ENCODE measurements at regions of chr9 and their contacts with region 1.

Region 1: DNA sequence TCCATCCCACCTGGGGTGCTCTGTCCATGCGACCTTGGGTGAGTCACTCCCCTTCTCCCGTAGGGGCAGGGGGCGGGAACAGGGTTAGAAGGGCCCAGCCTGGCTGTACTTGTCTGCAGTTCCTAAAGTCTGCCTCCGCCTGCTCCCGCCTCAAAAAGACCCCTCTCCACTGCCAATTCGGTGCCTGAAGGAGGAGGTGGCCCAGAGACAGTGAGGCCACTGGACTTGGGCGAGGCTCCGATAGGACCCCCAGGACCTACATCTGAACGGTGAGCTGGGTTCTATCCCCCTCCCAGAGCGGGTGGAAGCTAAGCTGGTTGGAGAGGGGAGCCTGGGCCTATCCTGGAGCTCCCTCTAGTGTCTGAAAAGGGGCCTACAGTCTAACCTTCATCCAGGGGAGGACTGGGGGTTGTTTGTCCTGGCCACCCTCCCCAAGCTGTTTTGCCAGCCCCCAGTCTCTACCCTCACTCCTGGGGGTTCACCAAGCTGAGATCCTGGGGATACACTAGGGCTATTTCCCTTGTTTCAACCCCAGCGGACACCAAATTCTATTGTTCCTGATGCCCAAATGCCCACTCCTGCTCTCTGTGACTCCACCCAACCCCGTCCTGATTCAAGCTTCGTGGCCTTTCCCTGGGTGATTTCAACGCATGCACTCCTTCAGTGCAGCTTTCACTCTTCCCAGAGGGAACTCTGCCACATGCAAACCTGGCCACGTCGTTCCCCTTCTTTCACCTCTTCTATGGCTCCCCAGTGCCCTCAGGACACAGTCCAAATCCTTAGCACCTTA is 6.1 kb upstream of the CRB2 start:
- DNase-seq: peak; percentile 46 to 91
- H3K4me3 ChIP-seq: peak overlapping the region in 1 of 4 experiments; percentile 35; a peak in 1 of 8 replicates
- H3K27ac ChIP-seq: no peak overlapping the region
- H3K4me1 ChIP-seq: peaks cover 0 to 11% (median under 1%) of the 10 kb centered on the region in 4 experiments; a peak in 4 of 7 replicates
- H3K27me3 ChIP-seq: no peaks in the 10 kb centered on the region; a peak in 2 of 7 replicates
- CTCF ChIP-seq: peak in 2 of 3 experiments; percentile 91 to 96; a peak in 3 of 4 replicates
- EP300 ChIP-seq: no peak
- POLR2A ChIP-seq: no peak
- RAD21 ChIP-seq: peak; percentile 100

Region 2: DNA sequence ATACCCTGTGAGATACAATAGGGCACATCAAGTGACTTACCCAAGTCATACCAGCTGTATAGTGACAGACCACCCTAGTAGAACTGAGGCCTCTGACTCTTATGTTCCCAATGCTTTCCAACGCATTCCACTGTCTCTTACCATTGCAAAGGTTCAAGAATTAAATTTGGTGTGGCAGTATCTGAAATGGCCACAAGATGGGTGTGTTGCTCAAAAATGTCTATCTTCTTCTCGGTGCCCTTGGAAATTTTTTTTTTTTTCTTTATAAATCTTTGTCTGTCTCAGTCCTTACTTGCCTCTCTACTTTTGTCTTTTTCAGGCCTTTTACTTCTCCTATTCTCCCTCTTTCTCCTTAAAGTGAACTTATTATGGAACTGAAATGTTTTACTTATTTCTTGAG is 268.1 kb before region 1 on chr9:
- CTCF ChIA-PET with region 1: interaction called, 53 read pairs
- POLR2A ChIA-PET with region 1: no interaction called
- DNase-seq: no peak
- H3K4me3 ChIP-seq: no peak overlapping the region
- H3K27ac ChIP-seq: no peak overlapping the region
- H3K4me1 ChIP-seq: peaks cover 0 to 5% (median 2%) of the 10 kb centered on the region in 4 experiments; a peak in 3 of 7 replicates
- H3K27me3 ChIP-seq: no peaks in the 10 kb centered on the region
- CTCF ChIP-seq: peak in 2 of 3 experiments; percentile 56 to 58; a peak in 2 of 4 replicates
- EP300 ChIP-seq: no peak
- POLR2A ChIP-seq: no peak
- RAD21 ChIP-seq: peak; percentile 84 to 86

Region 3: DNA sequence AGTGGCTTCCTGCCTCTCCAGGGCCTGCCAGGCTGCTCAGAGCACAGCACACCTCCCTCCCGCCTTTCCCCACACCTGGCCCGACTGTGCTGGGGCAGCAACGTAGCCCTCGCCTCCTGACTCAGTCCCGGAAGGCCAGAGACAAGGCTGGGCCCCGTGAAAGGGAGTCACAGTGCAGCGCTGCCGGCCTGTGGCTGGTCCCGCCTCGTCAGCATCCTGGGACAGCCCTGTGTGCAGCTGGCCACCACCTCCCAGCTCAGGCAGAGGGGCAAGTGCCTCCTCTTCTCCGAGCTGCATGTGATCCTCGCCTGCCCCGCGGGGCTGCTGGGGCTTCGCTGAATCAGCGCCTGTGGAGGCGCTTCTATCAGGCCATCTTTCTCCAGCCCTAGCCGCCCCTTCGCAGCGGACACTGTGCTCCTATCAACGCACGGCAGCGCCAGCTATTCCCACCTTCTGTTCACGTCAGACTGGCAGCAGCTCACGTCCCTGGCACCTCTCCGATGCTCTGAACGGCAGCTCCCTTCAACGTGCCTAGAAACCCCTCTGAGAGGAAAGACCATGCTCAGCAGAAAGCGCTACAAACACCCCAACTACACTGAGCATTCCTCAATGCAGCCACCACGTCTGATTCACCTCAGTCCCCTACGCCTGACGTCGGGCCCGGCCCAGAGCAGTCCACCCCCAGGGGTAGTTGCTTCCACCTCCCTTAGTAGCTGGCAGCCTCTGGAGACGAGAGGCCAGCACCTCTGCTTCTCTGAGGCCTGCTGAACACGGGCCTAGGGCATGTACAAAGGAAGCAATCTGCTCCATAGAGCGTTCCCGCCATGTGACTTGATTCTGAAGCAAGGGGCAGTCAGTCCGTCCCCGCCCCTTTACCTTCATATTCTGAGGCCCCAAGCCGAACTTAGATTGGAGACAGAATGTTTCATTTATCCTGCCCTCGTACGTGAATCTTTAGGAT is 237.6 kb before region 1 on chr9:
- CTCF ChIA-PET with region 1: interaction called, 21 read pairs
- POLR2A ChIA-PET with region 1: interaction called, 3 read pairs
- DNase-seq: no peak
- H3K4me3 ChIP-seq: no peak overlapping the region
- H3K27ac ChIP-seq: no peak overlapping the region
- H3K4me1 ChIP-seq: peaks cover 0 to 11% (median 5%) of the 10 kb centered on the region in 4 experiments; a peak in 5 of 7 replicates
- H3K27me3 ChIP-seq: no peaks in the 10 kb centered on the region
- CTCF ChIP-seq: no peak
- EP300 ChIP-seq: no peak
- POLR2A ChIP-seq: 0 out of 3 replicates have a peak, but pooled peaks of 1 of the 2 experiments have one; percentile 34
- RAD21 ChIP-seq: no peak

Region 4: GRCh38 chr9:123268240-123268949 is 81.5 kb before region 1 on chr9 and contains the start of gene STRBP:
- CTCF ChIA-PET with region 1: interaction called, 12 read pairs
- POLR2A ChIA-PET with region 1: no interaction called
- DNase-seq: peak; percentile 61 to 94
- H3K4me3 ChIP-seq: peak within 1 kb of the TSS; percentile 53 to 99 (median 67)
- H3K27ac ChIP-seq: no peak within 1 kb of the TSS
- H3K4me1 ChIP-seq: peaks cover 0 to 27% (median 8%) of the 10 kb centered on the region in 4 experiments; a peak in 6 of 7 replicates
- H3K27me3 ChIP-seq: no peaks in the 10 kb centered on the region
- CTCF ChIP-seq: 0 out of 4 replicates have a peak, but pooled peaks of 1 of the 3 experiments have one; percentile 2
- EP300 ChIP-seq: peak in 1 of 2 experiments; percentile 69; a peak in 1 of 3 replicates
- POLR2A ChIP-seq: peak in 1 of 2 experiments; percentile 27; a peak in 1 of 3 replicates
- RAD21 ChIP-seq: no peak; a peak in 1 of 4 replicates
- total RNA-seq, gene STRBP: 105 and 106 TPM in 2 replicates

Region 5: DNA sequence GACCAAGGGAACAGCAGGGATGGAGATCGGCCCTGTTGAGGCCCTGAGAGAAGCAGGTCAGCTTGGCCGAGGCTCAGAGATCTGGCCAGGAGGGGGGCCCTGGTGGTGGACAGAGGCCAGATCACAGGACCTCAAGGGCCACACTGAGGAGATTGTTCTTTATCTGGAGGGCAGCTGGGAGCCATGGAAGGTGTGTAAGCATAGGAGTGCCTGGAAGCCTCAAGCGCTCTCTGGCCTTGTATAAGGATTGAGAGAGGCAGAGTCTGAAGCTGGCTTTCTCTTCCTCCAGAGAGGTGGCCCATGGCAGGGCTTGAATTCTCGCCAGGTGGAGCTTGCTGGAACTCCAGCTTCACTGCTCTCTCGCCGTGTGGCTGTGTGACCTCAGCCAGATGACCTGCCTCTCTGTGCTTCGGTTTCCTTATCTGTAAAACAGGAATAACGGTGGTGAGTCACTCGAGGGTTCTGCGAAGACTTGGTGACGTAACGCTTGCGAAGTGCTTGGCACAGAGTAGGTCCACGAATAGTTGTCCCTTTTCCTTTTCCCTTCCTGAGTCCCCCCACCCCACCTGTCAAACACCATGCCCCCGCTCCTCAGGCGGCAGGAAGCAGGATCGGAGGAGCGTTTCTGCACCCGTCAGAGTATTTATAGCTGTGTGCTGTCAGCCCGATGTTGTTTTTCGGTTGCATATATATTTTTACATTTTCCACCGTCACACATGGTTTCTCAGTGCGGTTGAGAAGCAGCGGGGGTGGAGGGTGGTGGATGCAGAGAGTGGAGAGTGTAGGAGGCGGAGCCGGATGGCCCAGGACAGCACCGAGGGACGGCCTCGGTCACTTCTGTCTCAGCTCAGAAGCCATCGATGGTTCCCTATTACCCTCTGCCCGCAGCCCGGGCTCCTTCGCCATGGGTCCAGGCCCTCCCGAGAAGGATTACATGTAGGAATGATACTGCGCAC is 10.9 kb before region 1 on chr9:
- CTCF ChIA-PET with region 1: interaction called, 20 read pairs
- POLR2A ChIA-PET with region 1: interaction called, 5 read pairs
- DNase-seq: no peak
- H3K4me3 ChIP-seq: no peak overlapping the region
- H3K27ac ChIP-seq: no peak overlapping the region
- H3K4me1 ChIP-seq: peaks cover 3 to 18% (median 7%) of the 10 kb centered on the region in 4 experiments
- H3K27me3 ChIP-seq: no peaks in the 10 kb centered on the region
- CTCF ChIP-seq: no peak
- EP300 ChIP-seq: no peak
- POLR2A ChIP-seq: no peak
- RAD21 ChIP-seq: no peak

Region 6: DNA sequence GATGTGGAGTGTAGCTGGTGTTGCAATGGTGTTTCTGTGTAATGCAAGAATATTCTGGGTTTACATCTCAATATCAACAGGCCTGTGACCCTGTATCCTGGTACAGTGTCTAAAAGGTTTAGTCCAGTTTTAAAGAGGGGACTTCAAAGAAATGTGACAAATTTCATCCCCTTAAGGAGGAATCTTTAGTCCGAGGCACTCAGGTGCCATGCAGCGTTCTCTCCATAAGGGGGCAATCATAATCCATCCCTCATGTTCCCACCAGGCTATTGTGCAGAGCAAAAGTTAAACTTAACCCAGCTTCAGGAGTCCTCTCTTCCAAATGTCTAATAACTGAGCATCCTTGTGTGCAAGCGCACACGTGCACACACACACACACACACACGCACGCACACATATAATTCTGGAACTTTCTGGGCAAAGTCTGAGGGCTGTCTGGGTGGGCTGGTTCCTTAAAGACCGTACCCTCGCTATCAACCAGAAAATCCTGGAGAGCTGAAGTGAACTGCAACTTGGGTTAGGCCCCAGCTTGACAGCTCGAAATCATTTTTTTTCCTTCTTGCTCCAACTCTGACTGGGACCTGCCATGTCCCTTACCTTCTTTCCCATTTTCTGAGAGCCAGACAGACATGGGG is 52.1 kb after region 1 on chr9:
- CTCF ChIA-PET with region 1: interaction called, 668 read pairs
- POLR2A ChIA-PET with region 1: no interaction called
- DNase-seq: no peak
- H3K4me3 ChIP-seq: no peak overlapping the region
- H3K27ac ChIP-seq: no peak overlapping the region
- H3K4me1 ChIP-seq: peaks cover 0 to 11% (median 9%) of the 10 kb centered on the region in 4 experiments; a peak in 6 of 7 replicates
- H3K27me3 ChIP-seq: no peaks in the 10 kb centered on the region; a peak in 1 of 7 replicates
- CTCF ChIP-seq: peak; percentile 57 to 90 (median 73)
- EP300 ChIP-seq: no peak
- POLR2A ChIP-seq: no peak
- RAD21 ChIP-seq: peak; percentile 89 to 93